Activated CD4-positive, alpha-beta memory T cell treated with anti-CD3 and anti-CD28 coated beads, Interleukin-2, amount 10 ng/mL, durations not matched to agents 7 days and 5 days (primary cell): ENCODE measurements at regions of chr1 and their contacts with region 1.

Region 1: GRCh38 chr1:39026051-39026865 is at the start of gene NDUFS5:
- DNase-seq: peak; percentile 88
- H3K4me3 Mint-ChIP-seq: peak within 1 kb of the TSS; percentile 83
- H3K27ac Mint-ChIP-seq: peak within 1 kb of the TSS; percentile 91
- H3K4me1 Mint-ChIP-seq: peaks cover 30% of the 10 kb centered on the region
- H3K27me3 Mint-ChIP-seq: peaks cover 2% of the 10 kb centered on the region
- total RNA-seq, gene NDUFS5: 148 to 153 TPM

Region 2: GRCh38 chr1:38873027-38873969 is 153.0 kb before region 1 on chr1 and contains the start of gene MYCBP:
- CTCF ChIA-PET with region 1: interaction called, 6 read pairs
- POLR2A ChIA-PET with region 1: interaction called, 10 read pairs
- DNase-seq: peak; percentile 98
- H3K4me3 Mint-ChIP-seq: peak within 1 kb of the TSS; percentile 92
- H3K27ac Mint-ChIP-seq: peak within 1 kb of the TSS; percentile 81
- H3K4me1 Mint-ChIP-seq: peaks cover 43% of the 10 kb centered on the region
- H3K27me3 Mint-ChIP-seq: no peaks in the 10 kb centered on the region
- total RNA-seq, gene MYCBP: 55.3 to 60.7 TPM

Region 3: GRCh38 chr1:38973659-38974424 is 52.4 kb before region 1 on chr1:
- CTCF ChIA-PET with region 1: interaction called, 4 read pairs
- POLR2A ChIA-PET with region 1: interaction called, 14 read pairs
- DNase-seq: no peak
- H3K4me3 Mint-ChIP-seq: no peak overlapping the region
- H3K27ac Mint-ChIP-seq: no peak overlapping the region
- H3K4me1 Mint-ChIP-seq: peaks cover 21% of the 10 kb centered on the region
- H3K27me3 Mint-ChIP-seq: no peaks in the 10 kb centered on the region

Region 4: GRCh38 chr1:38990738-38991639 is 35.3 kb before region 1 on chr1 and contains the start of gene AKIRIN1:
- CTCF ChIA-PET with region 1: interaction called, 4 read pairs
- POLR2A ChIA-PET with region 1: interaction called, 13 read pairs
- DNase-seq: peak; percentile 96
- H3K4me3 Mint-ChIP-seq: peak within 1 kb of the TSS; percentile 91
- H3K27ac Mint-ChIP-seq: peak within 1 kb of the TSS; percentile 72
- H3K4me1 Mint-ChIP-seq: peaks cover 50% of the 10 kb centered on the region
- H3K27me3 Mint-ChIP-seq: no peaks in the 10 kb centered on the region
- total RNA-seq, gene AKIRIN1: 68.8 to 72.5 TPM

Region 5: DNA sequence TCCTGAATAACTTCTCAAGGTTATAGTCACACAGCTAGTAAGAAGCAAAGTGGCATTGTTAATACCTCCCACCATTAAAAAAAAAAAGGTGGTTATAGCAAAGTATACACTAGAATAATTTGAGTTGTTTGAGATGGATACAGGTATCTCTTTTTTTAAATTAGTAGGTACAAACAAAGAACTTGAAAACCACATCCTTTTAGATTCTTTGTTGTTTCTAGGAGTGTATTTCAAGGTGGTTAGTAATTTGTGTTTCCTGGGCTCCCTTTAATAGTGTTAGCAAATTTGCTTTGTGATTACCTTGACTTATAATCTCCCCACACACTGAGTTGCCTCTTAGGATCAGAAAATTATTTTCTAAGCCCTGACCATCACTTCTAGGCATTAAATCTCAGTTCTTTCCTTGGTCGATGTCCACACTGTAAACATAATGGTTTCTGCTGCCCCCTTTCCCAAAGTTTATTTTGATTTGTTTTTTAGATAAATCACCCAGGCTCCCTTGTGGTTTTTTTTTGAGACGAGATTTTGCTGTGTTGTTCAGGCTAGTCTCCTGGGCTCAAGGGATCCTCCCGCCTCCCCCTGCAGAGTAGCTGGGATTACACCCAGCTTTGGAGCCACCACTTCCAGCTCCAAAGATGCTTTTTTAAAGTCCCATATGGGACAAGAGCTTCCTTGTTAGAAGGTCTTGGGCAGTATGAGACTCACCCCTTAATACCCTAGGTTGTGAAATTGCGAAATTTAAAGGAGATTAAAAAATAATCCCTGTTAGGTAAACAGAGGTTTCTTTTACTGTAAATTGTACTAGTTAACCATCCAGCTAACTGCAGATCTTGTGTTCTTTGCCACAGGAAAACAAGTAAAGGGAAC is 29.0 kb before region 1 on chr1:
- CTCF ChIA-PET with region 1: interaction called, 3 read pairs
- POLR2A ChIA-PET with region 1: interaction called, 13 read pairs
- DNase-seq: no peak
- H3K4me3 Mint-ChIP-seq: peak overlapping the region; percentile 55
- H3K27ac Mint-ChIP-seq: peak overlapping the region; percentile 72
- H3K4me1 Mint-ChIP-seq: peaks cover 74% of the 10 kb centered on the region
- H3K27me3 Mint-ChIP-seq: no peaks in the 10 kb centered on the region

Region 6: DNA sequence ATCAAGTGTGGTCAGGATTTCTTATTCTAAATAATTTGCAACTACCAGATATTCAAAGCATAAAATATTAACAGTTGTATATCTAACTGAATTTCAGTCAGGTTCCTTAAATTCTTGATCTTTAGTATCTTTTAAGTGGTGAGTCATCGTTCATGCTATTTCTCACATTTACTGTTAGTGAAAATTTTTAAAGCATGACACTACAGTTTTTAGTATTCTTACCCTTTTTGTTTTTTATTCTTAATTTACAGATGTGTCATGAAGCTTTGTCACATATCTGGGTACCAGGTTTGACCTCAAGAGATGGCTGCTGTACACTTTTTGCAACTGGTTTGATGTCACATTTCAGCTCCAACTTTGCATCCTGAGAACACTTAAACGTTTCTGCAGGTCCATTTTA is 22.5 kb before region 1 on chr1:
- CTCF ChIA-PET with region 1: interaction called, 3 read pairs
- POLR2A ChIA-PET with region 1: interaction called, 15 read pairs
- DNase-seq: no peak
- H3K4me3 Mint-ChIP-seq: no peak overlapping the region
- H3K27ac Mint-ChIP-seq: peak overlapping the region; percentile 58
- H3K4me1 Mint-ChIP-seq: peaks cover 41% of the 10 kb centered on the region
- H3K27me3 Mint-ChIP-seq: no peaks in the 10 kb centered on the region

Region 7: GRCh38 chr1:39091845-39092645 is 65.8 kb after region 1 on chr1:
- CTCF ChIA-PET with region 1: interaction called, 10 read pairs
- POLR2A ChIA-PET with region 1: no interaction called
- DNase-seq: peak; percentile 68
- H3K4me3 Mint-ChIP-seq: no peak overlapping the region
- H3K27ac Mint-ChIP-seq: no peak overlapping the region
- H3K4me1 Mint-ChIP-seq: peaks cover 7% of the 10 kb centered on the region
- H3K27me3 Mint-ChIP-seq: peaks cover 2% of the 10 kb centered on the region

Region 8: GRCh38 chr1:39204441-39205081 is 178.3 kb after region 1 on chr1 and contains the start of gene MACF1:
- CTCF ChIA-PET with region 1: no interaction called
- POLR2A ChIA-PET with region 1: no interaction called
- DNase-seq: peak; percentile 53
- H3K4me3 Mint-ChIP-seq: peak within 1 kb of the TSS; percentile 86
- H3K27ac Mint-ChIP-seq: peak within 1 kb of the TSS; percentile 99
- H3K4me1 Mint-ChIP-seq: peaks cover 52% of the 10 kb centered on the region
- H3K27me3 Mint-ChIP-seq: no peaks in the 10 kb centered on the region
- total RNA-seq, gene MACF1: 345 to 381 TPM